Activated CD4-positive, alpha-beta T cell treated with anti-CD3 and anti-CD28 coated beads for 36 hours (primary cell): ENCODE measurements at regions of chr11 and their contacts with region 1.

Region 1: DNA sequence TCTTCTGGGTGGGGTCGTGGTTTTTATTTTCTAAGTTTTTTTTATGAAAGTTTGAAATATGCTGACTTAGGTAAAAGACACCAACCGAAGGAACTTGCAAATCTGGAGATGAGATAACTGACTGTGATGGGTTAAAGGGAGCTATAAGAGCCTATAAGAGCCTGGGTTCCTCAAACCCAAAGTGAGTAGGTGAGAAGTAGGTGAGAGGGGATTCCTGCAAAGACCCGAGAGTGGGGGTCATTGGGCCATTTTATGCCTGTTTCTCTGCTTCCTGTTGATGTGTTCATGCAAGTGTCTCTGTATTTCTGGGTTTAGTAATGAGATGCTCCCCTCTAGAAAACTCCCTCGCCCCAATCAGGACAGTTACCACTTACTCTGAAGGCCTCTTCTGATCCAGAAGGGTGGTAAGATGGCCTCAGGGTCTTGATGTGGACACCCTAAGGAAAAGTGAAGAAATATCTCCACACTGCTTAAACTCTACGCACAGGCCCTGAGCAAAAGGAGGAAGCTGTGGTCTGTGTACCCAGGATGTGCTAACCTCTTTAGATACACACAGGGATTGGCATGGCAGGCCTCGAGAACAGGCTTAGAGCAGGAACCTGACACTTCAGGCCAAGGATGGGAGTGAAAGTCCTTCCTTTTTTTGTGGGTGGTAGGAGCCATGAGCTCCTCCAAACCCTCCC is 1.8 kb downstream of the FLI1 start:
- DNase-seq: peak; percentile 49
- ATAC-seq: peak; percentile 24
- H3K4me3 Mint-ChIP-seq: peak overlapping the region; percentile 90
- H3K27ac Mint-ChIP-seq: peak overlapping the region; percentile 94
- H3K4me1 Mint-ChIP-seq: peaks cover 58% of the 10 kb centered on the region
- H3K27me3 Mint-ChIP-seq: peaks cover 9% of the 10 kb centered on the region

Region 2: GRCh38 chr11:128180446-128181087 is 515.1 kb before region 1 on chr11:
- CTCF ChIA-PET with region 1: no interaction called
- POLR2A ChIA-PET with region 1: no interaction called
- intact Hi-C with region 1: no loop called
- DNase-seq: no peak
- ATAC-seq: no peak
- H3K4me3 Mint-ChIP-seq: no peak overlapping the region
- H3K27ac Mint-ChIP-seq: no peak overlapping the region
- H3K4me1 Mint-ChIP-seq: peaks cover 21% of the 10 kb centered on the region
- H3K27me3 Mint-ChIP-seq: no peaks in the 10 kb centered on the region

Region 3: GRCh38 chr11:128720522-128720985 is 24.9 kb after region 1 on chr11:
- CTCF ChIA-PET with region 1: interaction called, 3 read pairs
- POLR2A ChIA-PET with region 1: interaction called, 7 read pairs
- intact Hi-C with region 1: loop called (anchors 1 to 2 kb)
- DNase-seq: peak; percentile 73
- ATAC-seq: peak; percentile 68
- H3K4me3 Mint-ChIP-seq: peak overlapping the region; percentile 69
- H3K27ac Mint-ChIP-seq: peak overlapping the region; percentile 96
- H3K4me1 Mint-ChIP-seq: peaks cover 98% of the 10 kb centered on the region
- H3K27me3 Mint-ChIP-seq: no peaks in the 10 kb centered on the region